ENCODE measurements at regions of chr9 and their contacts with region 1.

Region 1: DNA sequence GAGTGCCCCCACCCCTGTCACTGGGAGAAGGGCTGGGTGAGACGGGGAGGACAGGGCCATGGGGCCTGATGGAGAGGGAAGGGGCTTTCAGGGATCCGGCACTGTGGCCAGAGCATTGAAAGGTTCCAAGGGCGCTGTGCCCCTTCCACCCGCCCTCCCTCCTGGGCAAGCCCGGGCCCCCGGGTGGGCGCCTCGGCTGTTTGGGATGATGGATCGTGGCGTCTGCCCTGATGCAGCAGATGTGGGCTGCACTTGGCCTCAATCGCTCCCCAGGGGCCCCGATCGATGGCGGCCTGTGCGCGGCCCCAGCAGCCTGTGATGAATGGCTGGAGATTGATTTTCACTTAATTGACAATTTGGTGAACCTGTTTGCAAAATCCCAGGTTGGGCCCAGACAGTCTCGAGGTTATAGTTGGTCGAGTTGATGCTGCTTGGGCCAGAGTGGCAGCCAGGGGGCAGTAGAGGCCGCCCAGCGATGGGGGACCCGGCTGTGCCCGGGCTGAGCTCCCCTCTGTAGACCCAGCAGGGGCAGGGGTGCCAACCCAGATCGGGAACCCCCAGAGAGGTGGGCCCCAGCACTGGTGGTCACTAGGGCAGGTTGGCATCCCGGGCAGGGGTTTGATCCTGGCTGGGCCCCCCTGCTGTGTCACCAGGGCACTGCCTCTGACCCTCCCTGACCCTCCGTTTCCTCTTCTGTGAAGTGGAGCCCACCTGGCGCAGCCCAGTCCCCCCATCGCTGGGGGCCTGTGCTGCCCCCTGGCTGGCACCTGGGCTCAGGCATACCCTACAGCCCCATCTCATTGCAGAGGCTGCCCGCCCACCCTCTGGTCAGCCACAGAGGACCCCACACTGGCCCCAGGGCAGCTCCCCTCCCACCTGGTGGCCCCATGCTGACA is 34.7 kb downstream of the LHX3 start:
- DNase-seq: no peak
- H3K4me3 ChIP-seq: no peak overlapping the region
- CTCF ChIP-seq: peak; percentile 76

Region 2: DNA sequence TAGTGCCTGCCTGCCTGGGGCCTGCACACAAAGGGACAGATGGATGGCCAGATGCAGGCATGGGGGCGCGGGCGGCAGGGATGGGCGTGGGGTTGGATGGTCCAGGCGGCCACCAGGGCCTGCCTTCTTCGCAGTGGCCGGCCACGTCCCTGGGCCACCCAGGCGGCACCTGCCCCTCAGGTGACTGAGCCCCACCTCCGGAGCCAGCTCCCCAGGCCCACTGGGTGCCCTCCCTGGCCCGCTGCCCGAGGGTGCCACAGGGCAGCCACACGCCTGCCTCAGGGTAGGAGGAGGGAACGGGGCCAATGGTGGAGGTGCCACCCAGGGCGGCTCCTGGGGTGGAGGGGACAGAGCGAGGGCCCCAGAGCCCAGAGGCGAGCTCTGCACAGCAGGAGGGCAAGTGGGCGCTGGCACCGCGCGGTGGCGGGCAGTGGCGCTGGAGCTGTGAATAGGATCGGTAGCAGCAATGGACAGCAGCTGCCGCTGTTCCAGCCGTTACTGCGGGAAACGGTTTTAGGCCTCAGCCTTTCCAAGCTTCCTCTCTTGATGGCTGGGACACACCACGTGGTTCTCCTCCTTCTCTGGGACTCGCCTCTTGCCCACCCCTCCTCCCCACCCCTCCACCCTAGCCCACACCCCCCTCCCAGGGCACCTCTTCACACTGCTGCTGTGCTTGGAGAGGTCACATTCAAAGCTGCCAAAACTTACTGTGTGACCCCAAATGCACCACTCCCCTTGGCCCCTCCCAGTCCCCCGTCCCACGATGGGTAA is 15.5 kb after region 1 on chr9:
- CTCF ChIA-PET with region 1: interaction called, 21 read pairs
- POLR2A ChIA-PET with region 1: no interaction called
- DNase-seq: no peak
- H3K4me3 ChIP-seq: no peak overlapping the region
- CTCF ChIP-seq: no peak

Measured in AG04449 (cell line).